Vagina (tissue), 2 donors: ENCODE measurements at regions of chr19 and their contacts with region 1.

Region 1: DNA sequence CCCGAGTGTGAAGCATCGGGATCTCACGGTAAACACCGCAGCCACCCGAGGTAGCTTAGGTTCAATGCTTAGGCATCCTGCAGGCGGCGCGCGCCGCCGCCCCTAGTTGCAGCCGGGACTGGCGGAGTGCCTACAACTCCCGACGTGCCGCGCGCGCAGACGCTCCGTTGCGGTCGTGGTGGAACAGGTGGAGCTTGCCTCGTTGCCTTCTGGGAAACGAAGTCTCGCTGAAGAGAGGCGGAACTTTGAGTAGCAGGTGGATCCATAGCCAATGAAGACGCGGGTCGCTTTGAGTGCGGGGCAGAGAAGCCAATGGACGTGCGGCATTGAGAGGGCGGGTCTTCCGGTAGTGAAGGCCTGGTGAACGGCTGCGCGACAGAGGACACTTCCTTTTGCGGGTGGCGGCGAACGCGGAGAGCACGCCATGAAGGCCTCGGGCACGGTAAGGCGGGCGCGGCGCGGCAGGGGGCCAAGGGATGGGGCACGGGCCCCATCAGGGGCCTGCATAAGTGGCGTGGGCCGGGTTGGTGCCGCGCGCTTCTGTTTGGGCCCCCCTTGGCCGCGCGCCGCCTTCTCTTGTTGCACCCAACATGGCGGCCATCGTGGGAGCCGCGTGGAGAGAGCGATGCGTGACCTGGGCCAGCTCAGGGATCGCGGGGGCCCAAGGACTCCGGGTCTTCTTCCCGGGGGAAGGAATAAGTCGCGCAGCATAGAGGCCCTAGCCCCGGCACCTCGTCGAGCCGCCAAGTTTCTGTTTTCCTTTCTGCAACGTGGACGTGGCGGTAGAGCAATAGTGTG is at the start of gene RPL18A:
- DNase-seq: peak; percentile 100
- H3K4me3 ChIP-seq: peak within 1 kb of the TSS; percentile 77 to 92
- H3K27ac ChIP-seq: peak within 1 kb of the TSS; percentile 77
- H3K4me1 ChIP-seq: peaks cover 17% of the 10 kb centered on the region
- H3K27me3 ChIP-seq: no peaks in the 10 kb centered on the region
- CTCF ChIP-seq: peak; percentile 42 to 83 (median 64)
- POLR2A ChIP-seq: peak in 1 of 2 donors; percentile 91
- total RNA-seq, gene RPL18A: 1,768 TPM

Region 2: GRCh38 chr19:17932485-17933338 is 73.0 kb after region 1 on chr19 and contains the start of gene CCDC124:
- intact Hi-C with region 1: loop called (anchors 5 kb)
- DNase-seq: no peak
- H3K4me3 ChIP-seq: peak within 1 kb of the TSS; percentile 68 to 91
- H3K27ac ChIP-seq: peak within 1 kb of the TSS; percentile 87
- H3K4me1 ChIP-seq: peaks cover 25% of the 10 kb centered on the region
- H3K27me3 ChIP-seq: no peaks in the 10 kb centered on the region
- CTCF ChIP-seq: peak; percentile 6 to 48 (median 46)
- POLR2A ChIP-seq: peak in 1 of 2 donors; percentile 74
- total RNA-seq, gene CCDC124: 59.7 TPM

Region 3: DNA sequence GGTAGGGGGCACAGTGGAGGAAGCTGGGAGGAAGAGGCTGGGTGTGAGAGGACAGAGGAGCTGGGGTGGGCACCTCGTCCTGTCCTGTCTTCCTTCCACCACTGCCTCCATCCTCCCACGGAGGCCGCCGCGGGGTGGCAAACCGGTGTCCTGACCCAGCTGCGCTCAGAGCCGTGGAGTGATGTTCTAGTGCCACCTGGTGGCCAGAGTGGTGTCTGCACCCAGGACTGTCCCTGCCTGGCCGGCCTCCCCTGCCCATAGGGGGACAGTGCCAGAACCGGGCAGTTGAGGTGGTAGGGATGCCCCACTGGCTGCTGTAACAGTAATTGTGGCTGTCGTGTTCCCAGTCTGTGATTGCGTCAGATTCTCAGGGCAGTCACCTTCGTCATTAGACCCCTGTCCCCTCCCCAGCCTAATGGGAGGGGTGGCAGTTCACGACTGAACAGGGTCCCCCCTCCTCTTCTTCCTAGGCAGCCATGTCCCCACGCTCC is 137.1 kb after region 1 on chr19:
- intact Hi-C with region 1: loop called (anchors 10 kb)
- DNase-seq: no peak
- H3K4me3 ChIP-seq: no peak overlapping the region
- H3K27ac ChIP-seq: no peak overlapping the region
- H3K4me1 ChIP-seq: peaks cover 14% of the 10 kb centered on the region
- H3K27me3 ChIP-seq: no peaks in the 10 kb centered on the region
- CTCF ChIP-seq: peak; percentile 97 to 100 (median 98)
- POLR2A ChIP-seq: no peak